ENCODE measurements at regions of chr10 and their contacts with region 1.

Region 1: GRCh38 chr10:24724381-24725228 is 918 bp upstream of the ARHGAP21 start:
- DNase-seq: peak; percentile 97
- H3K4me3 Mint-ChIP-seq: peak overlapping the region; percentile 89
- H3K27ac Mint-ChIP-seq: peak overlapping the region; percentile 89
- H3K4me1 Mint-ChIP-seq: peaks cover 14% of the 10 kb centered on the region
- H3K27me3 Mint-ChIP-seq: no peaks in the 10 kb centered on the region

Region 2: DNA sequence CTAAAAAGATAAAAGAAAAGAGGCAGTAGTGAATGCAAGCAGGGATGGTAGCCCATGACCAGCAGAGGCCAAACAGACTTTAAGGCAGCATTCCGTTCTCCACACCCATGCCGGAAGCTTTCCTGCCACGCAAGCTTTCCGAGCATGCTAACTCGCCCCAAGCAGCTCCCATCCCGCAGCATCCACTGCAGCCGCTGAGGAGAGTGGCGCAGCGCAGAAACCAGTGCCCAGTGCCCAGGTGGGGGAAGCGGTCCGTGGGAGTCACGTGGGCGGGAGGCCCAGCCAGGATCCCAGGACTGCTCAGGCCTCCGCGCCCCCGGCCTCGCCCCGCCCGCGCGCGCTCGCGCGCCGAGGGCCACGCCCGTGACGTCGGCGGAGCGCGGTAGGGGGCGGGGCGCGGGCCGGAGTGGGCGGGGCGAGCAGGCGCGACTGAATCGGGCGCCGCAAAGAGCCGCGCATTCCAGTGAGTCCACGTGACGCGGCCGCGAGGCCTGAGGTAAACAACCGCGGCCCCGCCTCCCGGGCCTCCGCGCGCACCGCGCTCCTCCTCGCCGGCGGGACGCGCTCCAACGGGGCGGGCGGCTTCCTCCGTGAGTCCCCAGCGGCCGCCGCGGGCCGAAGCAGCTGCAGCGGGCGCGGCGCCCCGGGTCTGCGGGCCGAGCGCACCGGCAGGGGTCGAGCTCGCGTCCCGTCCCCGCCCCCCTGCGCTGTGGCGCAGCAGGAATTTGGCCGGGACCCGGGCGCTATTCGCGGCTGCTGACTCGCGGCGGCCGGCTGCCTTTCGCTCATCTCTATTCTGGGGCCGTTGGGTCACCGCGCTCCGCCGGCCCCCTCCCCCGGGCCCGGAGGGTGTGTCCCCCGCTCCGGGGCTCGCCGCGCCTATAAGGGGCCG is 1285.8 kb before region 1 on chr10 and contains the start of gene OTUD1:
- CTCF ChIA-PET with region 1: no interaction called
- intact Hi-C with region 1: loop called (anchors 10 kb)
- DNase-seq: peak; percentile 94
- H3K4me3 Mint-ChIP-seq: peak within 1 kb of the TSS; percentile 94
- H3K27ac Mint-ChIP-seq: peak within 1 kb of the TSS; percentile 84
- H3K4me1 Mint-ChIP-seq: peaks cover 33% of the 10 kb centered on the region
- H3K27me3 Mint-ChIP-seq: no peaks in the 10 kb centered on the region
- total RNA-seq, gene OTUD1: 15.7 to 16.0 TPM

Region 3: DNA sequence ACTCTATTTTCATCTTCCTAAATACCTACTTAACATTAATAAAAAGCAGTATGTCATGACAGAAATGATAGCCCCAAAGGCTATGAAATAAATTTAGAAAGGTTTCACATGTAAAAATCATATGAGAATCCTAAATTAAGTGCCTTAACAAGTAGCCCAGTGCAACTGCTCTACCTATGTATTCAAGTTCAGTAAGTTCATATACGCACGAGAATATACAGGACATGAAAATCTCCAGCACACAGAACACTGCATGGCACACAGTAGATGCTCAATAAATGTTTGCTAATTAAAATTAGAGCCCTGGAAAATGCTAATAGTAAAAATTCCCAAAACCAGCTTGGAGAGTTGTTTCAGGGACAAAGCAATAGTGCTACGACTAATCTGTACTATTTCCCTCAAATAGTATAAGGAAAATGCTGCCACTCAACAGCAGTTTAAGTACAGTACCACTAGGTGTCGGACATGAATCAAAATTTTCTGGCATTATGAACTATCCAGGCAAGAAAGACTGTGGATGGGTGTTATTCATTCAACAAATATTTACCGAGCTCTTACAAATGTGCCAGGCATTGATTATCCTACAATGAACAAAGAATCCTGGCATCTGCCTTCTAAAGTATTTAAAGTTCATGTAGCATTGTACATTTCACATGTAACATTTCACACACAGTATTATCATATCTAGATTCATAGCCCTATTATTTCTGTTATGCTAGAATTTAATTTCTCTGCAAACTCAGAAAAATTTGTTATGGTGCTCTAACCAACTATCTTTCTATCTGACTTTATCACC is 81.8 kb before region 1 on chr10:
- CTCF ChIA-PET with region 1: interaction called, 5 read pairs
- intact Hi-C with region 1: loop called (anchors 1 kb)
- DNase-seq: peak; percentile 12
- H3K4me3 Mint-ChIP-seq: no peak overlapping the region
- H3K27ac Mint-ChIP-seq: no peak overlapping the region
- H3K4me1 Mint-ChIP-seq: no peaks in the 10 kb centered on the region
- H3K27me3 Mint-ChIP-seq: no peaks in the 10 kb centered on the region

Region 4: DNA sequence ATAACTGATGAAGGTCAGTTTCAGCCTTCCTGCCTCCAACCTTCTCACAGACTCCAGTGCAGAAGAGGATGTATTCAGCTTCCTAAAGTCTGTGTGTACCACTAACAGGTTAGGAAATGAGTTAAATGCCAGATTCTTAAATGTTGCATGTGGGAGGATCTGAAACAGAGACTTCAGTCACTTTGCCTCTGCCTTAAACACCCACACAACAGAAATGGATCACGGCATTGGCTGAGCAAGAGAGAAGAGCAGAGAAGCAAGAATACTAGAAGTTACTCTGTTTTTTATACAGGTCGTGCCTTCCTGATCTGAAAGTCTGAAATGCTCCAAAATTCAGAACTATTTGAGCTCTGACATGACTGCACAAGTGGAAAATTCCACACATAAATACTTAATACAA is 98.0 kb after region 1 on chr10:
- CTCF ChIA-PET with region 1: no interaction called
- intact Hi-C with region 1: loop called (anchors 2 kb)
- DNase-seq: peak; percentile 35
- H3K4me3 Mint-ChIP-seq: no peak overlapping the region
- H3K27ac Mint-ChIP-seq: no peak overlapping the region
- H3K4me1 Mint-ChIP-seq: peaks cover 45% of the 10 kb centered on the region
- H3K27me3 Mint-ChIP-seq: no peaks in the 10 kb centered on the region

Region 5: GRCh38 chr10:24901686-24902399 is 177.2 kb after region 1 on chr10:
- CTCF ChIA-PET with region 1: no interaction called
- intact Hi-C with region 1: loop called (anchors 1 kb)
- DNase-seq: peak; percentile 37
- H3K4me3 Mint-ChIP-seq: no peak overlapping the region
- H3K27ac Mint-ChIP-seq: no peak overlapping the region
- H3K4me1 Mint-ChIP-seq: peaks cover 33% of the 10 kb centered on the region
- H3K27me3 Mint-ChIP-seq: peaks cover 2% of the 10 kb centered on the region

Region 6: GRCh38 chr10:25016376-25017154 is 292.0 kb after region 1 on chr10 and contains the start of gene THNSL1:
- CTCF ChIA-PET with region 1: no interaction called
- intact Hi-C with region 1: loop called (anchors 1 kb)
- DNase-seq: peak; percentile 97
- H3K4me3 Mint-ChIP-seq: peak within 1 kb of the TSS; percentile 93
- H3K27ac Mint-ChIP-seq: peak within 1 kb of the TSS; percentile 99
- H3K4me1 Mint-ChIP-seq: peaks cover 19% of the 10 kb centered on the region
- H3K27me3 Mint-ChIP-seq: no peaks in the 10 kb centered on the region
- total RNA-seq, gene THNSL1: 6.3 to 7.1 TPM

Region 7: GRCh38 chr10:25080880-25081581 is 356.4 kb after region 1 on chr10:
- CTCF ChIA-PET with region 1: no interaction called
- intact Hi-C with region 1: loop called (anchors 2 kb)
- DNase-seq: peak; percentile 77
- H3K4me3 Mint-ChIP-seq: no peak overlapping the region
- H3K27ac Mint-ChIP-seq: no peak overlapping the region
- H3K4me1 Mint-ChIP-seq: peaks cover 3% of the 10 kb centered on the region
- H3K27me3 Mint-ChIP-seq: peaks cover 8% of the 10 kb centered on the region

Region 8: GRCh38 chr10:25222085-25222660 is 497.6 kb after region 1 on chr10:
- CTCF ChIA-PET with region 1: no interaction called
- intact Hi-C with region 1: no loop called
- DNase-seq: no peak
- H3K4me3 Mint-ChIP-seq: no peak overlapping the region
- H3K27ac Mint-ChIP-seq: no peak overlapping the region
- H3K4me1 Mint-ChIP-seq: no peaks in the 10 kb centered on the region
- H3K27me3 Mint-ChIP-seq: peaks cover 4% of the 10 kb centered on the region

Measured in activated naive CD4-positive, alpha-beta T cell treated with anti-CD3 and anti-CD28 coated beads for 36 hours (primary cell).